ENCODE measurements at regions of chr1 and their contacts with region 1.

Region 1: DNA sequence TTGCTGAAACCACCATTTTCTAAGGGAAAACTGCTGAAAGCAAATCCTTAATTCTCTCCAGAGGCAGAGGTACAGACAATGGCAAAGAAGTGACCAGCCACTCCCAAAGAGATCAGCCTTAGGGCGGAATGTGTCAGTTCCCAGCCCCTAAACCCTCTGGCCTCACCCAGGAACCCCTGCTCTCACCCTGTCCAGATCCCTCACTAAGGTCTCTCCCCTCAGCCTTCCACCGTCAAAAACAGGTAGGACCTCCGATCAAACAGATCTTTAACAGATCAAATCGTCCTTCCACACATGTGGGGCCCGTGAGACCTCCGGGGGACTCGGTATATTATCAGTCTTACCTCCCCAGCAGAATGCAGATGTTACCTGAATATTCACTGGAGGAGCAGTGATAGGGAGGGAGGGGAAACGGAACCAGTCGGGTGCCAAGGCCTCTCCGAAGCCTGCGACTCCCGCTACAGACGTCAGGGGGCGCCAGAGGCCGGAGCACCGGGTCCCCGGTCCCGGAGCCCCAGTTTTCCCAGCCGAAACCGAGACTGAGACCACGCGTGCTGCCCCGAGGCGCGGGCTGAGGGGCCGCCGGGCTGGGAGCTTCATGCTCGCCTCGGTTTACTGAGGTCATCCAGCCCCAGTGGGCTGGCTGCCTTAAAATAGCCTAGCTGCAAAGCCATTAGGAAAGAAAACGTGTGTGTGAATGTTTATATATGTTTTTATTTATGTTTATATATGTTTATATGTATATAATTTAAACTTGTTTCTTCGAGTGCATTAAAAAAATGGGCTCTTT is 23.6 kb downstream of the GPA33 start:
- DNase-seq: no peak
- H3K4me3 ChIP-seq: peak overlapping the region in 2 of 3 experiments; percentile 40 to 50
- H3K27ac ChIP-seq: no peak overlapping the region
- H3K4me1 ChIP-seq: no peaks in the 10 kb centered on the region
- H3K27me3 ChIP-seq: no peaks in the 10 kb centered on the region
- CTCF ChIP-seq: peak; percentile 85 to 97 (median 87)

Region 2: GRCh38 chr1:166865931-166866330 is 200.6 kb before region 1 on chr1:
- dilution Hi-C with region 1: loop called (anchors 25 kb)
- DNase-seq: no peak
- H3K4me3 ChIP-seq: no peak overlapping the region
- H3K27ac ChIP-seq: no peak overlapping the region
- H3K4me1 ChIP-seq: no peaks in the 10 kb centered on the region
- H3K27me3 ChIP-seq: no peaks in the 10 kb centered on the region
- CTCF ChIP-seq: no peak

Region 3: GRCh38 chr1:166999090-166999489 is 67.4 kb before region 1 on chr1:
- dilution Hi-C with region 1: no loop called
- DNase-seq: no peak
- H3K4me3 ChIP-seq: no peak overlapping the region
- H3K27ac ChIP-seq: no peak overlapping the region
- H3K4me1 ChIP-seq: no peaks in the 10 kb centered on the region
- H3K27me3 ChIP-seq: no peaks in the 10 kb centered on the region
- CTCF ChIP-seq: no peak

Region 4: GRCh38 chr1:167273027-167273800 is 206.7 kb after region 1 on chr1:
- dilution Hi-C with region 1: no loop called
- DNase-seq: no peak
- H3K4me3 ChIP-seq: no peak overlapping the region
- H3K27ac ChIP-seq: no peak overlapping the region
- H3K4me1 ChIP-seq: peaks cover 2% of the 10 kb centered on the region
- H3K27me3 ChIP-seq: no peaks in the 10 kb centered on the region
- CTCF ChIP-seq: no peak

Region 5: DNA sequence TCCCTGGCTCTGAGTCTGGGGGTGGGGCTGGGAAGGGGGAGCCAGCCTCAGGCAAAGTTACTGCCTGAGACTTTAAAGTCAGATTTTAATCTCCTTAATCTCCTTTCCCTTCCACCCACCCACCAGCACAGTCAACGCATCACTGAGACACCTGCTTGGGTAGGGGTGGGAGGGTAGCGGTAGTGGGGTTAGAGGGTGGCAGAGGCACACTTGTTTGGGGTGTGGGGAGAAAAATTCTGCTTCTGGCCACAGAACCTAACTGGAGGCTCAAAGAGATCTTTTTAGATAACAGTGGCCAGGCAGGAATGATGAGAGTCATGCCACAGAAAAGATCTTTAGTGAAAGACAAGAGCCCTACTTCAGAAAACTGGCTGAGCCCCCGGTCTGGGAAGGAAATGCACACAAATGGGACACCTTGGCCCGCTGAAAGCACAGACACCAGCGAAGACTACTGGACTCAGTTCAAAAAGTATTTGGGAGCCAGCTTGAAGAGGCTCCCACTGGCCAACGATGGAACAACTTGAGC is 407.7 kb after region 1 on chr1:
- dilution Hi-C with region 1: no loop called
- DNase-seq: no peak
- H3K4me3 ChIP-seq: no peak overlapping the region
- H3K27ac ChIP-seq: no peak overlapping the region
- H3K4me1 ChIP-seq: no peaks in the 10 kb centered on the region
- H3K27me3 ChIP-seq: peaks cover 11% of the 10 kb centered on the region
- CTCF ChIP-seq: no peak

Region 6: DNA sequence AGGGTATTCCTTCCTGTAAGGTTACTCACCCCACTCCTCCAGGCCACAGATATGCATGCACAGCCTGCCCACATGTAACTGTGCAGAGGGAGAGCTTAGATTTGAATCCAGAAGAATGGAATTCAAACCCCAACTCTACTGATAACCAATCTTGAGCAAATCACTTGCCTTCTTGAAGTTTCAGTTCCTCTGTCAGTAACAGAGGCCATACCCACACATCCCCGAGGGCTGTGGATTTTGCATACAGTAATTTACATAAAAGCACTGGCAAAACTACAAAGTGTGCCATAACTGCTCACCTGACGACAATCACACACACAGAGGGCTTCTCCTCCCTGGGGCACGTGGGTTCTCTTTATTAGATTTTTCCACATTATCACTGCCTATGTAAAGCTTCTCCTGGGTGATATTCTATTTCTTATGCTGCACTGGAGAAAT is 433.2 kb after region 1 on chr1:
- dilution Hi-C with region 1: loop called (anchors 25 kb)
- DNase-seq: no peak
- H3K4me3 ChIP-seq: no peak overlapping the region
- H3K27ac ChIP-seq: no peak overlapping the region
- H3K4me1 ChIP-seq: no peaks in the 10 kb centered on the region
- H3K27me3 ChIP-seq: peaks cover 20% of the 10 kb centered on the region
- CTCF ChIP-seq: no peak